Activated CD4-positive, alpha-beta T cell treated with anti-CD3 and anti-CD28 coated beads for 36 hours (primary cell): ENCODE measurements at regions of chr18 and their contacts with region 1.

Region 1: DNA sequence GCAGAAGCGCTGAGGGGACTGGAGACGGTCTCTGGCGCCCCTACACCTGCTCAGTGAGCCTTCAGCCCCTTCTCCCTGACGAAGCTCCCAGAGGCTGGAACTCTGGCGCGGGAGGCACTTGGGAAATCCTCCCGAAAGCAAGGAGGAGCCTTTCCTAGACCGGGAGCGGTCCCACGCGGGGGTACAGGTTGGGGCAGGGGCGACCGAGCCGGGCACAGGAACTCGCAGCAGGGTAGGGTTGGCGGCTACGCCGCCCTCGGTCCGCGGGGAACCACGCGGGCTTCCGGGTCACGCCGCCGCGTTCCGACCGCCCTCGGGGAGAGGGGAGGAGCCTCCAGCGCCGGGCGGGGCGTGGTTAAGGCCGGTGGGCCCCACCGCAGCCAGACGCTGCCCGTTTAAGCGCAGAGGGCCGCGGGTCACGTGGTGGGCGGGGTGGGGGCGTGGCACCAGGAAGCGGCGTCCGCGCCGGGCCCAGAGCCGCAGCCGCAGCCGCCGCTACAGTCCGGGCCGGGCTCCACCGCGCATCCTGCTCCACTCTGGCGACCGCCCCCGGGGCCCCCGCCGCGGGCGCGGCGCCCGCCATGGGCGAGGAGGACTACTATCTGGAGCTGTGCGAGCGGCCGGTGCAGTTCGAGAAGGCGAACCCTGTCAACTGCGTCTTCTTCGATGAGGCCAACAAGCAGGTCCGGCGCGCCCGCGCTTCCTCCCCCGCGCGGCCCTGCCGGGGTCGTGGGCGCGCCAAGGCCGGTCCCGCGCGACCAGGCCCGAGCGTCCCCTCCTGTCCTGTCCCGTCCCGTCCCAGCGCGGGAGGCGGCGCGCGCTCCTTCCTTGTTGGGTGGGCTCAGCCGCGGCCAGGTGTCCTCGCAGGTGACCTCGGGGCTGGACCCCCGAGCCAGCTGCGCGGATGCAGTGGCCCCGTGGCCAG is at the start of gene RMC1:
- DNase-seq: peak; percentile 99
- ATAC-seq: peak; percentile 91
- H3K4me3 Mint-ChIP-seq: peak within 1 kb of the TSS; percentile 94
- H3K27ac Mint-ChIP-seq: peak within 1 kb of the TSS; percentile 94
- H3K4me1 Mint-ChIP-seq: peaks cover 38% of the 10 kb centered on the region
- H3K27me3 Mint-ChIP-seq: no peaks in the 10 kb centered on the region
- total RNA-seq, gene RMC1: 28.7 to 29.8 TPM

Region 2: DNA sequence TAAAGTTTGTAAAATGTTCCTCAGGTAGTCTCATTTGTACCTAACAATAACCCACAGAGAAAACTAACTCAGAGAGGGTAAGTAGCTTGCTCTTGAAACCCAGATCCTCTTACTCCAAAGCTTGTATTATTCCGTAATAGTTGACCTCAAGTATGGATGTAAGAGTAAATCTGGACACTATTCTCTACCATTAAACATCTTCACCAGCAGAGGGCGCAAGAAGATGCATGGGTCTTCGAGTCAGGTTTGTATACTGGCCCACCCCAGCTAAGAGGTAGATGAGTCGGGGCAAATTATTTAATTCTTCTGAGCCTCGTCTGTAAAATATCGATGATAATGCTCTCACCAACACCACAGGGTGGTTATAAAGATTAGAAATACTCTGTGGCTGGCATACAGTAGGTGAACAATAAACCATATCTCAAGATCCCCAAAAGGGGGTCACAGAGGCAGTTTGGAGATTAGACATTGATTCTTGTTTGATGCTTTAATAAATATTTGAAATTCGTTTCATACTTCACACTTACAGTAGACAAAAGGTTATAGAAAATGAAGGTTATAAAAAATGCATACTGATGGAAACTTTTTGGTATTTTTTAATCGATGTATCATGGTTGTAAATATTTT is 371.5 kb before region 1 on chr18:
- CTCF ChIA-PET with region 1: no interaction called
- POLR2A ChIA-PET with region 1: no interaction called
- intact Hi-C with region 1: loop called in 1 of 2 experiments (anchors 1 kb)
- DNase-seq: peak; percentile 69
- ATAC-seq: no peak
- H3K4me3 Mint-ChIP-seq: no peak overlapping the region
- H3K27ac Mint-ChIP-seq: no peak overlapping the region
- H3K4me1 Mint-ChIP-seq: peaks cover 12% of the 10 kb centered on the region
- H3K27me3 Mint-ChIP-seq: peaks cover 17% of the 10 kb centered on the region

Region 3: GRCh38 chr18:23452728-23453679 is 50.3 kb before region 1 on chr18 and contains the start of gene RIOK3:
- CTCF ChIA-PET with region 1: interaction called, 10 read pairs
- POLR2A ChIA-PET with region 1: no interaction called
- intact Hi-C with region 1: loop called (anchors 1 kb)
- DNase-seq: peak; percentile 96
- ATAC-seq: peak; percentile 98
- H3K4me3 Mint-ChIP-seq: peak within 1 kb of the TSS; percentile 99
- H3K27ac Mint-ChIP-seq: peak within 1 kb of the TSS; percentile 81
- H3K4me1 Mint-ChIP-seq: peaks cover 42% of the 10 kb centered on the region
- H3K27me3 Mint-ChIP-seq: no peaks in the 10 kb centered on the region
- total RNA-seq, gene RIOK3: 71.1 to 71.2 TPM

Region 4: DNA sequence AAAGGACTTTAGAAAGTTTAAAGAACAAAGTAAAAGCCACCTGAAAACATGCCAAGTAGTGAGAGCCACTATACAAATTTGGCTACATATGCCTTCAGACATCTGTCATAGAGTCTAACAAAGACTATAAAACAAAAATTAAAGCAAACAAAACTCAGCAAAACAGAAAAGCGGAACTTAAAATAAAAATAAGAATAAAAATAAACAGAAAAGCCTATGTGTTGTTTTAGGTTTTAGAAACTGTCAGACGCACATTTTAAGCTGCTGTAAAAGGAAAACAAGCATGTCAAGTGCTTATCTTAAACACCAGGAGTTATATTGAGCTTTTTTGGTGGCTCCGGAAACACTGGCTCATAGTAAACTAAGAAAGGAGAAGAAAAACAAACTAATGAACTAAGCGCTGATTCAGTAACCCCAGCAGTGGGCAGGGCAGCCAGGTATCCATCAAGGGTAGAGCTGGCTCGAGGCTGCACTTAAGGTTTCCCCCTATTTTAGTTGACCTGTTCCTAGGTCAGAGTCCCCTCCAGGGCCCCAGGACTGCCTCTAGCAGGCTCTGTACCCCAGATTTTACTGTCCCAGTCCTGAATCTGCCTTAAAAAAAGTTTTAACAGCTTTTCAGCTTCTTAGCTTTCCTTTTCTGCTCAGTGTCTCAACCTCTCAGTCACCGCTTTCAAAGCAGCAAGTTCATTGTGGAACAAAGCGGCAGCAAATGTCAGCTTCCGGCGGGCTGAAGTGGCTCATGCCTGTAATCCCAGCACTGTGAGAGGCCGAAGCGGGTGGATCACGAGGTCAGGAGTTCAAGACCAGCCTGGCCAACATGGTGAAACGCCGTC is 15.3 kb before region 1 on chr18:
- CTCF ChIA-PET with region 1: interaction called, 22 read pairs
- POLR2A ChIA-PET with region 1: no interaction called
- intact Hi-C with region 1: loop called in 1 of 2 experiments (anchors 1 kb)
- DNase-seq: peak; percentile 76
- ATAC-seq: peak; percentile 86
- H3K4me3 Mint-ChIP-seq: peak overlapping the region; percentile 59
- H3K27ac Mint-ChIP-seq: peak overlapping the region; percentile 90
- H3K4me1 Mint-ChIP-seq: peaks cover 19% of the 10 kb centered on the region
- H3K27me3 Mint-ChIP-seq: no peaks in the 10 kb centered on the region

Region 5: GRCh38 chr18:23586249-23587196 is 83.2 kb after region 1 on chr18 and contains the start of gene NPC1:
- CTCF ChIA-PET with region 1: interaction called, 9 read pairs
- POLR2A ChIA-PET with region 1: no interaction called
- intact Hi-C with region 1: loop called (anchors 1 kb)
- DNase-seq: peak; percentile 95
- ATAC-seq: peak; percentile 95
- H3K4me3 Mint-ChIP-seq: peak within 1 kb of the TSS; percentile 94
- H3K27ac Mint-ChIP-seq: peak within 1 kb of the TSS; percentile 91
- H3K4me1 Mint-ChIP-seq: peaks cover 39% of the 10 kb centered on the region
- H3K27me3 Mint-ChIP-seq: no peaks in the 10 kb centered on the region
- total RNA-seq, gene NPC1: 21.6 to 29.2 TPM

Region 6: DNA sequence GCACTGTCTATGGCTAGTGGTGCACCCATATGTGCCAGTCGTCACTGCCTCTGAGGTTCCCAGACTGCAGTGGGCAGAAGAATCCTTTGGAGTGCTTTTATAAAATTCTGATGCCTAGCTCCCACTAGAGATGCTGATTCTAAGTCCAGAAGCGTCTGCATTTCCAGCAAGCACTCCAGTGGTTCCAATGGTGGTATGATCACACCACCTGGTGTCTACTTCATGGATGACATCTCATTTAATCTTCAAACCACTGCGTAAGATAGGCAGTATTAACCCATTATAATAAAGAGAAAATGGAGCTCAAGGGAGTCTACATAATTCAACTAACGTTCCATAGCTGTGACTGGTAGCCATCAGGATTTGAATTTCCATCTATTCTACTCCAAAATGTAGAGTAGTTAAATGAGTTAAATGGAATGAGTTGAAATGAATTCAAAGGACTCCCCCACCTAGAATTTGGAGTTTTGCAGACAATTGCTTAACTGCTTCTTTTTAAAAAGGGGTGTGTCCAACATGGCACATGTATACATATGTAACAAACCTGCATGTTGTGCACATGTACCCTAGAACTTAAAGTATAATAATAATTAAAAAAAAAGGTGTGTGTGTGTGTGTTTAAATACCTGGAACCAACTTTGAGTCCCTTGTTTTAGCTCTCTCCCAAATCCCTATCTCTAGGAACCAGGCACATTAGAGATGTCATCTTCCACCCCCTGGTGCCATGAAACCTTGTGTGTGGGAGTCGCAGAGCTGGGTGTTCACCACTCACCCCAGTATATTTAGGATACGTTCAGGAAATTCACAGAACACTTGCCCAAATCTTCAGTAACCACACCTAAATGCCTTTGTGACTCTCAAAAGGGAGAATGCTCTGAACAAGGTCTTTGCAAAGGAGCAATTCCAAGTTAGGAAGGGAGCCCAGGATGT is 200.0 kb after region 1 on chr18:
- CTCF ChIA-PET with region 1: interaction called, 5 read pairs
- POLR2A ChIA-PET with region 1: no interaction called
- intact Hi-C with region 1: loop called in 1 of 2 experiments (anchors 1 kb)
- DNase-seq: peak; percentile 27
- ATAC-seq: peak; percentile 76
- H3K4me3 Mint-ChIP-seq: no peak overlapping the region
- H3K27ac Mint-ChIP-seq: no peak overlapping the region
- H3K4me1 Mint-ChIP-seq: no peaks in the 10 kb centered on the region
- H3K27me3 Mint-ChIP-seq: peaks cover 8% of the 10 kb centered on the region

Region 7: GRCh38 chr18:24014062-24014985 is 511.0 kb after region 1 on chr18 and contains the start of gene TTC39C:
- CTCF ChIA-PET with region 1: no interaction called
- POLR2A ChIA-PET with region 1: no interaction called
- intact Hi-C with region 1: loop called in 1 of 2 experiments (anchors 10 kb)
- DNase-seq: peak; percentile 93
- ATAC-seq: peak; percentile 68
- H3K4me3 Mint-ChIP-seq: peak within 1 kb of the TSS; percentile 94
- H3K27ac Mint-ChIP-seq: peak within 1 kb of the TSS; percentile 84
- H3K4me1 Mint-ChIP-seq: peaks cover 70% of the 10 kb centered on the region
- H3K27me3 Mint-ChIP-seq: peaks cover 2% of the 10 kb centered on the region
- total RNA-seq, gene TTC39C: 22.2 to 28.6 TPM